Left cardiac atrium (tissue), 4 donors: ENCODE measurements at regions of chr4 and their contacts with region 1.

Region 1: GRCh38 chr4:78864405-78865024 is 74.7 kb downstream of the PAQR3 start:
- DNase-seq: no peak
- ATAC-seq: peak; percentile 53 to 71

Region 2: DNA sequence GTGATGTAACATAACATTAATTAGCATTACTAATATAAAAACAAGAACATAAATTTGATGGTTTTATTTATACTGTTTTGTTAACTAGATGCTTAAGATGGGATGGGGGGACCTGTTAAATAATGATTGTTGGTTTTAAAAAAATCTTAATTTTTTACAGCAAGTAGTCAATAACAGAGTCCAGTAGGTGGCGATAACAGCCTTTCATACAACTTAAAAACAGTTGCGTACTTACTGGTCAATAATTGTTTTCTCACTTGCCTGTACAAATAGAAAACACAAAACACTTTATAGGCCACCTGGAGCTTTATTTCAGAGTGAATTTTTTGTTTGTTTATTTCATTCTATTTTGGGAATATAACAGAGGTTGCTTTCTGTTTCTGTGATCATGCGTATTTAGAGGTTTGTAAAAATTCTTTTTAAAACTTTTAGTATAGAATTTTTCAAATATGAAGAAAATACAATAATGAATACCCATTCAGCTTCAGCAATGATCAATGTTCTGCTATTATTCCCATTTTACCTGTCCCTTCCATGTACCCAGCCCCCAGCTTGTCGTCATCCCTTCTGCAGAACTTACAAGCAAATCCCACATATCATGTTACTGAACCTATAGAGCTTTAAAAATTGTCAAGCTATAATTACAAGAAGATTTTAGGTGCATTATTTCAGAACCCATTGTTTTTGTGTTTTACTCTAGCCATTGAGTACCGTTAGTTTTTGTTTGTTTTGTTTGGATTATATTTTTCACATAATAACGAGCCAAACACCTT is 904.8 kb before region 1 on chr4:
- intact Hi-C with region 1: loop called in 1 of 2 experiments (anchors 5 kb)
- DNase-seq: no peak
- ATAC-seq: no peak

Region 3: DNA sequence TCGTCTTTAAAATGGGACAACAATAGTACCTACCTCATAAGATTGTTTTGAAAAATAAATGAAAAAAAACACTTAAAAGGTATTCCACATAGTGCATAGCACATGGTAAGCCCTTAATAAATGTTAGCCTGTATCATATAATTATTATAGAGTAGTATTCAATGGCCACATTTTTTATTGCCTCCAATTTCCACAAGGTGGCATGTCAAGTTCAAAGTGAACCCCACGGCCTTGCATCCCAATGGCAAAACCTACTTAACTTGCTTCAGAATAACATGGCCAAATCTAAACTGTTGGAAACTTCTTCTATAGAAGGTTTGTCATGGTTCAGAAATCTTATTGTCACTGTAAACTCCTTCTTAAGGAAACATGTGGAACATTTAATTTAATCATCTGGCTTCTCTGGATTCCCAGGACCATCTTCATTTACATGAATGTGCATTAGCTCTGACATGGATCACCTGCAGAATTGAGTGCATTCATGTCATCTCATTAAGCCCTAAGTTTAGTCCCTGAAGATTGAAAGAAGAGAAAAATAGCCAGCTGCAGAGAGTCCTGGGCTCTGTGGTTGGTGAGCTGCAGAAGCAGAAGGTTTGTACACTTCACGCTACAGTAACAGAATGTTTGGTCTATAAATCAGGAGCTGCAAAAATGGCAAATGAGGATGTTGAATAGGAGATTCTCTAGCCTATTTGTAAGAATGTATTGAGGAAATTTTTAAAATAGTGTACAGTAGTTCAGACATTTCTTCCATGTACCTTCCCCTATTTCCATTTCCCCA is 251.9 kb before region 1 on chr4:
- intact Hi-C with region 1: loop called (anchors 2 to 5 kb)
- DNase-seq: no peak
- ATAC-seq: peak; percentile 76 to 81

Region 4: DNA sequence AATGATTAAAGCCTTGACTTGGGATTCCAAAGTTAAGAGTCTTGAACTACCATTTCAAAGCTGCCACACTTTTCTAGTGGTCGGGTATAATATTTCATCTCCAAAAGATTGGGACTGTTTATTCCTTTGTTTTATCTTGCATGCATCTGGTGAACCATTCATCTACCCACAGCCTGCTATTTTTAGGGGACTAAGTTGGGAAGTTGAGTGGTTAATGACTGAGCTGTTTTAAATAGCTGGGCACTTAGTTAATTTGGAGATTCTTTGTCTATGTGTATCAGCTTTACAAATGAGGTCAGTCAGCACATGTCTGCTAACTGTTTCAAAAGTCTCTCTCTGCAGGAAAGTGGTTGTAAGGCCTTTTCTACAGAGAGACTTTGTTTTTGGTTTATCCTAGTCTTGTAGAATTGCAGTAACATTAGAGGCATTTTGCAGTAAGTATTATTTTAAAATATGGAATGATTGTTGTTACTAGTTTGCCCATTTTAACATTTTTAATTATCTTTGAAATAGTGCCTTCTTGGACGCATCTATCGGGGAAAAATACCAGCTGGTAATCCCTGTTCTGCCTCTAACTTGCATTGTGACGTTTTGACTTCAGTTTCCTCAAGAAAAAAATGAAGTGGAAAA is 80.2 kb before region 1 on chr4:
- intact Hi-C with region 1: loop called in 1 of 2 experiments (anchors 5 kb)
- DNase-seq: no peak
- ATAC-seq: peak; percentile 59 to 70